Ovary (tissue), 10 donors: ENCODE measurements at regions of chr20 and their contacts with region 1.

Region 1: DNA sequence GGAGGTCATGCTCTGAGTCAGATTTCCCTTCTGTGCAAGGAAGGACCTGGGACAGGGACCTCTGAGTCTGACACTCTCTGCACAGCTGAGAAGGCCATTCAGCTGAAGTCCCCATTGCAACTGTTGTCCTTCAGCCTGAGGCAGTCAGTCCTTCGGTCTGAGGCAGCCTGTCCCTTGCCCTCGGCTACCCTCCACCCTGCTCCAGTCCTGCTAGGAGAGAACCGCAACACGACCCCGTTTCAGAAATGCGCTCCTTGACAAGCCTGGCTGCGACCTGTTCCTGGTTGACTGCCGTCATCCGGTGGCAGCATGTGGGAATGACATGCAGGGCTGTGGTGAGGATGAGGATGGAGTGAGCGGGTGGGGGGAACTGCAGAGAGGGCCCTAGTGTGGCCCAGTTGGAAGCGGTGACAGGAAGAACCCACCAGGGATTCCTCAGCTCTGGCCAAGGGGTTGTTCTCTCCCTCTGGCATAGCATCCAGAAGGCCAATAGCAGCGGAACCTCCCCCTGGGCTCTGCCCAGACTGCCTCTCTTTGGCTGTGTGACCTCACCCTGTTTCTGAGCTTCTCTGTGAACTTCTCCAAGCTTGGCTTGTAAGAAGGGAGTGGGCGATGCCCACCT is 40.3 kb upstream of the ANGPT4 start:
- DNase-seq: peak; percentile 50 to 82 (median 71)
- H3K4me3 ChIP-seq: no peak overlapping the region
- H3K27ac ChIP-seq: no peak overlapping the region
- H3K4me1 ChIP-seq: no peaks in the 10 kb centered on the region
- H3K27me3 ChIP-seq: no peaks in the 10 kb centered on the region
- CTCF ChIP-seq: peak; percentile 81 to 97 (median 97)
- EP300 ChIP-seq: no peak
- POLR2A ChIP-seq: peak; percentile 8

Region 2: DNA sequence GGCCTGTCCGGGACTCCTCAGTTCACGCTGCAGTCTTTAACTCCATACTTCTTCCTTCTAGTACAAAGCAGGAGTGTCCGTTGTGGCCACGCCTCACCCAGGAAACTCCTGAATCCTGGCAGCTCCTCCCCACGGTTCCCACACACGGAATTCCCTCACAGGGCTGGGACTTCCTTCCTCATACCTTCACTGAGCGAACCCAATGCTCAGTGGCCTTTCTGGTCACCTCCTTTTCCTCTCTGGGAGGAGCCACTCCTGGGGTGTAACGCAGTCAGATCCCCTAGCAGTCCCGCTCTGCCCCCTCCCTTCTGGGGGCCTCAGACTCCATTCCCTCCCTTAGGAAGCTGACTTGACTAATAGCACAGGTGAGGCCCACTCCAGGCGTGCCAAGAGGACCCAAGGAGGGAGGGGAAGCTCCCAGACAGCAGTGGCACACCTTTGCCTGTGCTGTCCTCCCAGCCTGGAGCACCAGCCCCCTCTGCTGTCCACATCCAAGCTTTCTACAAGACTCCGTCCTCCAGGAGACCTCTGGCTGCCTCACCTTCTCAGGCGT is 187.9 kb before region 1 on chr20 and contains the start of gene SLC52A3:
- intact Hi-C with region 1: no loop called
- DNase-seq: peak in 1 of 5 donors; percentile 24
- H3K4me3 ChIP-seq: no peak within 1 kb of the TSS
- H3K27ac ChIP-seq: no peak within 1 kb of the TSS
- H3K4me1 ChIP-seq: no peaks in the 10 kb centered on the region
- H3K27me3 ChIP-seq: no peaks in the 10 kb centered on the region
- CTCF ChIP-seq: no peak
- EP300 ChIP-seq: no peak
- POLR2A ChIP-seq: no peak
- total RNA-seq, gene SLC52A3: 0.78 to 10.0 (median 2.3) TPM

Region 3: GRCh38 chr20:815914-816606 is 140.4 kb before region 1 on chr20:
- intact Hi-C with region 1: loop called (anchors 2 kb)
- DNase-seq: peak; percentile 29 to 70 (median 59)
- H3K4me3 ChIP-seq: no peak overlapping the region
- H3K27ac ChIP-seq: no peak overlapping the region
- H3K4me1 ChIP-seq: no peaks in the 10 kb centered on the region
- H3K27me3 ChIP-seq: no peaks in the 10 kb centered on the region
- CTCF ChIP-seq: peak; percentile 77 to 91 (median 85)
- EP300 ChIP-seq: no peak
- POLR2A ChIP-seq: no peak

Region 4: GRCh38 chr20:859751-860231 is 96.7 kb before region 1 on chr20:
- intact Hi-C with region 1: no loop called
- DNase-seq: no peak
- H3K4me3 ChIP-seq: no peak overlapping the region
- H3K27ac ChIP-seq: no peak overlapping the region
- H3K4me1 ChIP-seq: no peaks in the 10 kb centered on the region
- H3K27me3 ChIP-seq: no peaks in the 10 kb centered on the region
- CTCF ChIP-seq: no peak
- EP300 ChIP-seq: no peak
- POLR2A ChIP-seq: no peak

Region 5: DNA sequence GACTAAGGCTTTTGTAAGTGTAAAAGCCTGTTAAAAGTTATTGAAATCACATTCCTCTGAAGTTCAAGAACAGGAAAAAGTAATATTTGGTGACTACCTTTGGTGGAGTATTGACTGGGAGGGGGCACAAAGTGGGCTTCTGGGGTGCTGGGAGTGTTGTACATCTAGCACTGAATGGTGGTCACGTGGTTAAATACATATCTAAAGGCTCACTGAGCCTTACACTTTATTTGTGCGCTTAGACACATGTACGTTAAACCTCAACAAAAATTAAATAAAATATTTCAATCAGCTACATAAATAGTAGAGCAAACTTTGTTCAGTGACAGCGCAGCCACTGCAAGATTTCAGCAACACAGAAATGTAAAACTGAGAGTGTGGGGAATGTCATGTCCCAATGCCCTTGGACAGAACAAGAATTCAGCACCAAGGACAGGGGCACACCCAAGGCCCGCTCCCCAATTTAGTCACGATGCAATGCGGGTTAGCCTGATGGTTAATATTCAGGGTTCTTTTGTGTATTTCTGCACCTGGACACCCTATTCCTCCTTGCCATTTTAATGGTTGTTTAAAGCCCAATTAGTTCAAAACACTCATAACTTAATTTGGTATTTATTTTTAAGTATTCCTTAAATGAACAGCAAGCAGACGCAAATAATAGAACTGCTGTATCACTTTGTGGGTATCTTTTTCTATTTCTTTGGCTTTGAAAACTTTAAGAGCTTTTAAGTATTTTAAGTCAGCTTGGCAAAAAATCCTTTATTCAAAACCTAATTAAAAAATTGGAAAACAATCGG is 77.7 kb before region 1 on chr20:
- intact Hi-C with region 1: loop called in 3 of 4 experiments (anchors 5 to 10 kb)
- DNase-seq: no peak
- H3K4me3 ChIP-seq: no peak overlapping the region
- H3K27ac ChIP-seq: no peak overlapping the region
- H3K4me1 ChIP-seq: no peaks in the 10 kb centered on the region
- H3K27me3 ChIP-seq: no peaks in the 10 kb centered on the region
- CTCF ChIP-seq: no peak
- EP300 ChIP-seq: no peak
- POLR2A ChIP-seq: no peak

Region 6: GRCh38 chr20:884983-885952 is 71.2 kb before region 1 on chr20:
- intact Hi-C with region 1: loop called in 2 of 4 experiments (anchors 5 kb)
- DNase-seq: peak; percentile 60 to 90 (median 79)
- H3K4me3 ChIP-seq: no peak overlapping the region
- H3K27ac ChIP-seq: no peak overlapping the region
- H3K4me1 ChIP-seq: peaks cover 7% of the 10 kb centered on the region
- H3K27me3 ChIP-seq: no peaks in the 10 kb centered on the region
- CTCF ChIP-seq: peak in 2 of 3 donors; percentile 49 to 69
- EP300 ChIP-seq: no peak
- POLR2A ChIP-seq: no peak

Region 7: GRCh38 chr20:1033751-1034414 is 77.4 kb after region 1 on chr20:
- intact Hi-C with region 1: no loop called
- DNase-seq: no peak
- H3K4me3 ChIP-seq: no peak overlapping the region
- H3K27ac ChIP-seq: no peak overlapping the region
- H3K4me1 ChIP-seq: no peaks in the 10 kb centered on the region
- H3K27me3 ChIP-seq: no peaks in the 10 kb centered on the region
- CTCF ChIP-seq: no peak
- EP300 ChIP-seq: no peak
- POLR2A ChIP-seq: no peak